Activated CD4-positive, alpha-beta T cell treated with anti-CD3 and anti-CD28 coated beads for 36 hours (primary cell): ENCODE measurements at regions of chr9 and their contacts with region 1.

Region 1: GRCh38 chr9:14119694-14120514 is 194.0 kb downstream of the NFIB start:
- DNase-seq: no peak
- ATAC-seq: peak; percentile 47
- H3K4me3 Mint-ChIP-seq: no peak overlapping the region
- H3K27ac Mint-ChIP-seq: no peak overlapping the region
- H3K4me1 Mint-ChIP-seq: peaks cover 5% of the 10 kb centered on the region
- H3K27me3 Mint-ChIP-seq: no peaks in the 10 kb centered on the region

Region 2: DNA sequence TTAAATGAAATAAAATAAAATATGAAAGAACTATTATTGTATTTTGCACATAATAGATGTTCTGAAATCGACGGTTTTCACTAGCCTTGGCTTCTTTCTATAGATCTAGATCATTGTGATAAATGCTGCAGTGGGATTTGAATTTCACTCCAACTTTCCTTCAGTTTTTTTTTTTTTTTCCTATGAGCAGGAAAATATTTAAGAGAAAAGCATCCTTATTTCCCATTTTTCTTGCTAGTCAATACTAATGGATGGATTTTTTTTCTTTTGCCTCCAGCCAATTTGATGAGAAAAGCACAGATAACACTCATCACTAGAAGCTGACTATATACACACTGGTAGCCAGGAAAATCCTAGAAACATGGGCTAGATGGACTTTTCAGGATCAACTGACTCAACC is 55.0 kb before region 1 on chr9:
- CTCF ChIA-PET with region 1: no interaction called
- POLR2A ChIA-PET with region 1: interaction called, 11 read pairs
- intact Hi-C with region 1: no loop called
- DNase-seq: no peak
- ATAC-seq: no peak
- H3K4me3 Mint-ChIP-seq: no peak overlapping the region
- H3K27ac Mint-ChIP-seq: no peak overlapping the region
- H3K4me1 Mint-ChIP-seq: no peaks in the 10 kb centered on the region
- H3K27me3 Mint-ChIP-seq: no peaks in the 10 kb centered on the region